HAP-1 (cell line): ENCODE measurements at regions of chr3 and their contacts with region 1.

Region 1: DNA sequence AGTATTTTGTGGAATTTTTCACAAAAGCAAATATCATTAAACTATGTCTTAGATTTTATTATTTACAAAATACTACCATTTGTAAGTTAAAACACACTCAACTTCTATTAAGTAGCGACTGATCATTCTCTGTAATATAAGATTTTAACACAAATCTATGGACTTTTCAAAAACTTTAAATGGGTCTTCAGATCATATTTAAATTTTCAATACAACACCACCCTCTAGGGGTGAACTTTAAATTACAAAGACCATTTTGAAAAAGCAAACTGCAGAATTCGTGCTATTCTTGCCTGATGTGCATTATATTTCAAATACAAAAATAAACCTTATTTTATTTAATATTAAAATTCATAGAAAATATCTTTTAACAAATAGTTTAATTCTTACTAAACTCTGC is 8.2 kb upstream of the VGLL4 start:
- DNase-seq: peak in 1 of 2 experiments; percentile 56
- H3K4me3 ChIP-seq: no peak overlapping the region
- H3K4me1 ChIP-seq: peaks cover 7% of the 10 kb centered on the region
- H3K27me3 ChIP-seq: no peaks in the 10 kb centered on the region

Region 2: GRCh38 chr3:10945683-10946287 is 706.1 kb before region 1 on chr3:
- in situ Hi-C with region 1: loop called (anchors 25 kb)
- DNase-seq: peak; percentile 24 to 84
- H3K4me3 ChIP-seq: no peak overlapping the region
- H3K4me1 ChIP-seq: no peaks in the 10 kb centered on the region
- H3K27me3 ChIP-seq: 0 out of 2 replicates have a peak, but pooled peaks cover 4% of the 10 kb centered on the region

Region 3: DNA sequence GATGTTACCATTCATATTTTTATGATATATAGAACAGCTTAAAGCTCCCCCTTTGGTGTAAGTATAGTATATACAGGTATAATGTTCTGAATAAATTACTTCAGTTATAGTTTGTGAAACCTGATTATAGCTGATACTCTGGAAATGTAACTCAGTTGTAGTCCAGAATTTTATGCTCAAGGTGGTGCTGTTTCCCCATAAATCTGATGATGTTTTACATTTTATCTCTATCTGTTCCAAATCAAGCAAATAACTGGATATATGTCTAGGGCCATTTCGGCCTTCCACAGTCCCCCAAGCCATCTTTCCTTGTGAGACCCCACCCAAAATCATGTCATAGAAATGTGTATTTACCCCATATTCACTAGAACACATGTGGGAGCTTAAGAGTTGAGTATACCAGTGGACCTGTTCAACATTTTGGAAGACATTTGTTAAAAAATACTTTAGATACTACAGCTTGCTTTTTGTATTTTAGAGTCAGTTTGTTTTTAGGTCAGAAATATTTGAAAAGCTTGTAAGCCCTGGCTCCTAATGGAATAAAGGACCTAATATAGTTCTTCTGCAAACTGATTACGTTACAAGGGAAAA is 272.6 kb before region 1 on chr3:
- in situ Hi-C with region 1: loop called (anchors 5 kb)
- DNase-seq: peak; percentile 20 to 65
- H3K4me3 ChIP-seq: no peak overlapping the region
- H3K4me1 ChIP-seq: peaks cover 27% of the 10 kb centered on the region
- H3K27me3 ChIP-seq: no peaks in the 10 kb centered on the region

Region 4: DNA sequence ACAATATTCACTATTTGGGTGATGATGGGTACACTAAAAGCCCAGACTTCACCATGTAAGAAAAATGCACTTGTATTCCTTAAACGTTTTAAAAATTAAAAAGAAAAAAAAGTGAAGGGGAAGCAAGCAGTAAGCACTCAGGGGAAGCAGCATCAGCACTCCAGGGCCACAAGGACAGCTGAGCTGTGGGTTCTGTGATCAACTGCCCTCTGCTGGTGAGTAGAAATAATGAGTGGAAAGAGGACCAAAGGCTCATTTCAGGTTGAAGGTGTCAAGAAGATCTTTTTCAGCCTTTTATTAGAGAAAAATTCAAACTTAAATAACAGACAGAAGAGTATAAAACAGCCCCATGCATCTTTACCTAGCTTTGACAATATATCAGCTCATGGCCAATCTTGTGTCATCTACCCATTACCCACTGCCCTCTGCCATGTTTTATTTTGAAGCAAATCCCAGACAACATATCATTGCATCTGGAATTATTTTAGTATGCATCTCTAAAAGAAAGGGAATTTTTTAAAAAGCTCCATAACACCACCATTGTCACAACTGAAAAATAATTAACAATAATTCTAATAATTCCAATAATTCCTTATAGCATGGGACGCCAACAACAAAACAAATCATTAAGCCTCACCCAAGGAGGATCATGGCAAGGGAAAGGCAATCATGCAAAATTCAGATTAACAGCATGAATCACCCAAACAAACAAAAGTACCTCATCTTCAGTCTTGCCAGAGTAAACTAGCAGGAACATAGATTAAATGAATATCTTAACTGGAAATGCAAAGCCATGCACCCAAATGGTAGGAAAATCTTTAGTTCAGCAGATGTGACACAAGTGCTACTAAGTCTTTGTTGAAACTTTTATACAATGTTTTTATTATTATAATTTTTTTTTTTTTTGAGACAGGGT is 152.3 kb after region 1 on chr3:
- in situ Hi-C with region 1: loop called (anchors 10 kb)
- DNase-seq: peak; percentile 52 to 58
- H3K4me3 ChIP-seq: no peak overlapping the region
- H3K4me1 ChIP-seq: no peaks in the 10 kb centered on the region
- H3K27me3 ChIP-seq: no peaks in the 10 kb centered on the region